ENCODE measurements at regions of chr1 and their contacts with region 1.

Region 1: DNA sequence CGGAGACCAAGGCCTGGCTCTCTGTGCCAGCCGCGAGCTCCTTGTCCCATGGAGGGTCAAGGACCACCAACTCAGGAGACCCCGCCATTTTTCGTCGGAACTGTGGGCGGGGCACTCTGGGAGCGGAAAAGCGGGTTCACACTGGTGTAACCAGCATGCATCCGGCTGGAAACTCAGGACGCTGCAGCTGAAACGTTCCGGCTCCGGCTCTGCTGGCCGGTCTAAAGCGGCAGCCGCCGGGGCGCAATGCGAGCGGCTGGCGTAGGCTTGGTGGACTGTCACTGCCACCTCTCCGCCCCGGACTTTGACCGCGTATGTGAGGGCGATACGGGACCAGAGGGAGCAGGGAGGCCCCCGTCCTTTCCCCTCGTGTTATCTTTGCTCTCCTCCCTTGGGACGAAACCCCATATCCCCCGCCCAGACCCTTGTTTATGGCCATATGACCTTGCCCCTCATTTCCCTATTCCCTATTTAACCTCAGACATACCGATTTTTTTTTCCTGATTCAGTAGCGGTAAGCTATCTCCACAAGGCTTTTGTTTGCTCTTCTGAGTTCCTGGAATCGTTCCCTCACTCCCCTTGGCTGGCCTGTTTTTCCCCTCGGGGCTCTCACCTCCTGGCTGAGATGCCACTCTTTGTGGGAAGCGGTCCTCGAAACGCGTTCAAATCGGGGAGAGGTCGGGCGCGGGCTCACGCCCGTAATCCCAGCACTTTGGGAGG is at the starts of genes NSL1 and TATDN3:
- DNase-seq: peak; percentile 97
- ATAC-seq: peak; percentile 72
- H3K4me3 ChIP-seq: peak within 1 kb of the TSS; percentile 77 to 93 (median 83)
- H3K4me3 Mint-ChIP-seq: peak within 1 kb of the TSS; percentile 93
- H3K27ac ChIP-seq: peak within 1 kb of the TSS; percentile 91 to 92
- H3K27ac Mint-ChIP-seq: peak within 1 kb of the TSS; percentile 93
- H3K4me1 ChIP-seq: peaks cover 39 to 61% of the 10 kb centered on the region in 2 donors
- H3K4me1 Mint-ChIP-seq: peaks cover 46% of the 10 kb centered on the region
- H3K27me3 ChIP-seq: no peaks in the 10 kb centered on the region
- H3K27me3 Mint-ChIP-seq: no peaks in the 10 kb centered on the region
- CTCF ChIP-seq: no peak
- total RNA-seq, gene NSL1: 45.9 and 50.6 TPM in 2 replicates
- total RNA-seq, gene TATDN3: 28.6 and 30.7 TPM in 2 replicates

Region 2: GRCh38 chr1:211258756-211259637 is 1532.8 kb before region 1 on chr1 and contains the start of gene RCOR3:
- CTCF ChIA-PET with region 1: no interaction called
- POLR2A ChIA-PET with region 1: no interaction called
- intact Hi-C with region 1: loop called (anchors 5 kb)
- DNase-seq: peak; percentile 93
- ATAC-seq: peak; percentile 74
- H3K4me3 ChIP-seq: peak within 1 kb of the TSS; percentile 81 to 93 (median 90)
- H3K4me3 Mint-ChIP-seq: peak within 1 kb of the TSS; percentile 92
- H3K27ac ChIP-seq: peak within 1 kb of the TSS; percentile 88 to 90
- H3K27ac Mint-ChIP-seq: peak within 1 kb of the TSS; percentile 96
- H3K4me1 ChIP-seq: peaks cover 11 to 16% of the 10 kb centered on the region in 2 donors
- H3K4me1 Mint-ChIP-seq: peaks cover 15% of the 10 kb centered on the region
- H3K27me3 ChIP-seq: no peaks in the 10 kb centered on the region
- H3K27me3 Mint-ChIP-seq: no peaks in the 10 kb centered on the region
- CTCF ChIP-seq: peak; percentile 84
- total RNA-seq, gene RCOR3: 120 and 124 TPM in 2 replicates

Region 3: DNA sequence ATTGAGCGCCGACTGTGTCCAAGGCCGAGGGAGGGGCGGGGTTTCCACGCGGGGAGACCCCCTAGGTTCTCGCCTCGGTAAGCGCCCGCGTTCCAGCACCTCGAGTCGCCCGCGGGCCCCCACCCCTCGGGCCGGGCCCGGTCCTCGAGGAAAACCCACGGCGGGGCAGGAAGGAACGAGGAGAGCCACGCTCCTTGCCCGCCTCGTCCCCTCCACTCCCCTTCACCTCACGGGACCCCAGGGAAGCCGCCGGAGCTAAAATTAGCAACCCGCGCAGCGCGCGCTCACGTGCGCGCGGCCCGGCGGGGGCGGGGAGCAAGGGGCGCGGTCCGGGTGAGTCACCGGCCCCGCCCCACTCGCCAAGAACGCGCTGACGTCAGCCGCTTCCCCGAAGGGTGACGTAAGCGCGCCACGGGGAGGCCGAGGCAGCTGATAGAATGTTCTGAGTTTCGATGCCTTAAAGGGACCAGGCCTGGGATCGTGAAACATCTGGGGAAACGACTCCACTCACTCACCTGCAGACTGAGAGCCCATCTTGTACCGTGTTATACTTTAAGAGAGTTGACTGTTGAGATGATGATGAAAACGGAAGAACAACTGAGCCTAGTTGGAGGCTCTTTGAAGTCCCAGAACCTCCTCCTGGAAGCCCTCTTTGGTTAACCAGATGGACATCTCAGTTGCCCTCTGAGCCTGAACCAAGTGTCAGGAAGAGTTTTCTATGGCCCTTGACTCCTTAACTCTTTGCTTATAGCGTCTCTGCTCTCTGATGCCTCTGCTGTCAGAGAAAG is 232.9 kb before region 1 on chr1:
- CTCF ChIA-PET with region 1: no interaction called
- POLR2A ChIA-PET with region 1: interaction called, 3 read pairs
- intact Hi-C with region 1: loop called (anchors 1 kb)
- DNase-seq: peak; percentile 97
- ATAC-seq: peak; percentile 92
- H3K4me3 ChIP-seq: peak overlapping the region; percentile 36 to 89 (median 73)
- H3K4me3 Mint-ChIP-seq: peak overlapping the region; percentile 90
- H3K27ac ChIP-seq: peak overlapping the region; percentile 95 to 96
- H3K27ac Mint-ChIP-seq: peak overlapping the region; percentile 96
- H3K4me1 ChIP-seq: peaks cover 12% of the 10 kb centered on the region in 2 donors
- H3K4me1 Mint-ChIP-seq: peaks cover 13% of the 10 kb centered on the region
- H3K27me3 ChIP-seq: peaks cover 0 to 5% (median 0%) of the 10 kb centered on the region in 4 experiments
- H3K27me3 Mint-ChIP-seq: peaks cover 4% of the 10 kb centered on the region
- CTCF ChIP-seq: no peak

Region 4: DNA sequence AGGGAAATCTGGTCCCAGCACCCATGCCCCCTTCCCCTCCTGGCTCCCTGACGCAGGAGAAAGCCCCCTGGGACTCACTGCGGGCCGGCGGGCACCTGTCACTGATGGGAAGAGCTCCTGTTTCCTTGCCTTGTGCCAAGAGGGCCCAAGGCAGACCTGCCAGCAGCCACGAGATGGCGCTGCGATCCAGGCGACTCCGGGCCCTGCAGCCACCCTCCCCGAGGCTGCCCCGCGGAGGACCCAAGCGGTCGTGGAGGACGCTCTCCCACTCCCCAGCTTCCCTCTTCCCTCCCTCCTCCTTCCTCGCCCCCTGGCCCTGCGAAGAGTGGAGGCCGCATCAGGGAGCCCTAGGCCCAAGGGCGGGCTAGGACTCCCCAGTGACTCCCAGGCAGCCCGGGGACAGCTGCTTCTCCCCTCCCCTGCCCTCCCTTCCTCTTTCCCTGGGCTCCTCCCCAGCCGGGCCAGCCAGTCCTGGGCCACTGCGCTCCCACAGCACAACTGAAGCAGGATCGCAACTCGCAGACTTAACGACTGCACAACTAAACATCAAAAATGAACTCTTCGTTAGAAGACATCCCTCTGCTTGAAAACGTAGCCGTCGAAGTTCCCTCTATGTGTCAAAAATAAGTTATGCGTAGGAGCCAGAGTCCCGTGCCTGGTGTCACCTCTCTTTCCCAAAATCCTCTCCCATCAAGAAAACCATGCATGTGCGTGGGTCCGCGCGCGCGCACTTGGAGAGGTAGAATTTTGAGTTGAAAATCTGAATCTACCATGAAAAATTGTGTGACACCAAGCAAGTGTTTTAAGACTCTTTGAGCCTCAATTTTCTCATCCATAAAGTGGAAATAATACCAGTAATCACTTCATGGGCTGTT is 126.4 kb before region 1 on chr1:
- CTCF ChIA-PET with region 1: interaction called, 20 read pairs
- POLR2A ChIA-PET with region 1: no interaction called
- intact Hi-C with region 1: no loop called
- DNase-seq: peak; percentile 85
- ATAC-seq: peak; percentile 93
- H3K4me3 ChIP-seq: peak overlapping the region in 4 of 5 experiments; percentile 24 to 58 (median 48)
- H3K4me3 Mint-ChIP-seq: peak overlapping the region; percentile 79
- H3K27ac ChIP-seq: no peak overlapping the region
- H3K27ac Mint-ChIP-seq: no peak overlapping the region
- H3K4me1 ChIP-seq: peaks cover 6 to 22% of the 10 kb centered on the region in 2 donors
- H3K4me1 Mint-ChIP-seq: peaks cover 16% of the 10 kb centered on the region
- H3K27me3 ChIP-seq: peaks cover 0 to 6% (median 0%) of the 10 kb centered on the region in 4 experiments
- H3K27me3 Mint-ChIP-seq: no peaks in the 10 kb centered on the region
- CTCF ChIP-seq: peak; percentile 93

Region 5: GRCh38 chr1:212857992-212858460 is 66.2 kb after region 1 on chr1 and contains the start of gene FLVCR1:
- CTCF ChIA-PET with region 1: interaction called, 4 read pairs
- POLR2A ChIA-PET with region 1: interaction called, 14 read pairs
- intact Hi-C with region 1: loop called (anchors 1 kb)
- DNase-seq: peak; percentile 93
- ATAC-seq: peak; percentile 98
- H3K4me3 ChIP-seq: peak within 1 kb of the TSS; percentile 71 to 96 (median 82)
- H3K4me3 Mint-ChIP-seq: peak within 1 kb of the TSS; percentile 95
- H3K27ac ChIP-seq: peak within 1 kb of the TSS; percentile 51 to 85
- H3K27ac Mint-ChIP-seq: peak within 1 kb of the TSS; percentile 96
- H3K4me1 ChIP-seq: peaks cover 25 to 32% of the 10 kb centered on the region in 2 donors
- H3K4me1 Mint-ChIP-seq: peaks cover 22% of the 10 kb centered on the region
- H3K27me3 ChIP-seq: no peaks in the 10 kb centered on the region
- H3K27me3 Mint-ChIP-seq: no peaks in the 10 kb centered on the region
- CTCF ChIP-seq: no peak
- total RNA-seq, gene FLVCR1: 19.2 and 19.7 TPM in 2 replicates

Region 6: GRCh38 chr1:212892108-212892507 is 100.3 kb after region 1 on chr1:
- CTCF ChIA-PET with region 1: no interaction called
- POLR2A ChIA-PET with region 1: no interaction called
- intact Hi-C with region 1: no loop called
- DNase-seq: no peak
- ATAC-seq: no peak
- H3K4me3 ChIP-seq: no peak overlapping the region
- H3K4me3 Mint-ChIP-seq: no peak overlapping the region
- H3K27ac ChIP-seq: no peak overlapping the region
- H3K27ac Mint-ChIP-seq: no peak overlapping the region
- H3K4me1 ChIP-seq: no peaks in the 10 kb centered on the region
- H3K4me1 Mint-ChIP-seq: no peaks in the 10 kb centered on the region
- H3K27me3 ChIP-seq: no peaks in the 10 kb centered on the region
- H3K27me3 Mint-ChIP-seq: no peaks in the 10 kb centered on the region
- CTCF ChIP-seq: no peak

Region 7: DNA sequence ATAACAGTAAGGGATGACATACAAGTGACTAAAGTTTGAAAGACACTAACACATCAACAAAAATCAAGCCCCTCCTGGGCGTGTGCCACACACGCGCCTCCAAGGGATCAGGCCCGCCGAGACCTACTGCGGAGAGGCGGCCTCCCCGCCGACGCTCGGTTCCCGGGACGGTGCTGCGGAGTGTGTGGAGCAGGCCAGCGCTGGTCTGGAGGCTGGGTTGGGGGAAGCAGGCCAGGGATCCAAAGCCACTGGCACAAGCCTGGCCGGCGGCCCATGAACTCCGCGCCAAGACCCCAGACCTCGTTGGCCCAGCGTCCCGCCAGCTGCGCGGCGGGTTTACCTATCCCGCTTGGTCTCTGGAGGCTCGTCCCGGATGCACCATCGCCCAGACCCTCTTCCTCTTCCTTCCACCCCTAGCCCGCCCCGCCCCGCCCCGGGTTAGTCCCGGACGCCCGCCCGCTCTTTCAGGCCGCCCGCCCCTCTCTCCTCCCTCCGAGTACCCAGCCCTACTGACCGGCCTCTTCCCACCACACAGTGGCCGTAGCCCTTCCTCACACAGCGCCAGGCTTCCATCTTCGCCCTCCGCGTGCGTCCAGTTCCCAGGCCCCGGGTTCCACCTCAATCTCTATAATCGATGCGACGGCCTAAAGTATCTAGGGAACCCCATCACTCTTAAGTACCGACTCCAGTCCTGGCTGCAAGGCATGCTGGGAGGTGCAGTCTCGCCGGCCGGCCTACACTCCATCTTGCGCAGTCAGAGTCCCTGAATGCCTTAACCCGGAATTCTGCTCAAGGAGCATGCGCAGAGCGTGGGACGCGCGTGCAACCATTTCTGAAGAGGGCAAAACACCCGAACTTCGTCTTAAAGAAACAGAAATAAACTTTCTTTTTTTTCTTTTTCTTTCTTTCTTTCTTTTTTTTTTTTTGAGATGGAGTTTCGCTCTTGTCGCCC is 223.5 kb after region 1 on chr1 and contains the start of gene ANGEL2:
- CTCF ChIA-PET with region 1: no interaction called
- POLR2A ChIA-PET with region 1: no interaction called
- intact Hi-C with region 1: loop called (anchors 1 kb)
- DNase-seq: peak; percentile 97
- ATAC-seq: peak; percentile 96
- H3K4me3 ChIP-seq: peak within 1 kb of the TSS; percentile 65 to 89 (median 77)
- H3K4me3 Mint-ChIP-seq: peak within 1 kb of the TSS; percentile 98
- H3K27ac ChIP-seq: peak within 1 kb of the TSS; percentile 81 to 92
- H3K27ac Mint-ChIP-seq: peak within 1 kb of the TSS; percentile 99
- H3K4me1 ChIP-seq: peaks cover 7 to 14% of the 10 kb centered on the region in 2 donors
- H3K4me1 Mint-ChIP-seq: peaks cover 31% of the 10 kb centered on the region
- H3K27me3 ChIP-seq: no peaks in the 10 kb centered on the region
- H3K27me3 Mint-ChIP-seq: no peaks in the 10 kb centered on the region
- CTCF ChIP-seq: no peak
- total RNA-seq, gene ANGEL2: 86.0 and 94.2 TPM in 2 replicates